Activated CD4-positive, alpha-beta T cell treated with anti-CD3 and anti-CD28 coated beads for 36 hours (primary cell): ENCODE measurements at regions of chr22 and their contacts with region 1.

Region 1: GRCh38 chr22:22884010-22884887 is 3.4 kb upstream of the IGLL5 start:
- DNase-seq: peak; percentile 79
- ATAC-seq: peak; percentile 56
- H3K4me3 Mint-ChIP-seq: no peak overlapping the region
- H3K27ac Mint-ChIP-seq: no peak overlapping the region
- H3K4me1 Mint-ChIP-seq: peaks cover 12% of the 10 kb centered on the region
- H3K27me3 Mint-ChIP-seq: peaks cover 7% of the 10 kb centered on the region

Region 2: GRCh38 chr22:22748297-22748743 is 135.9 kb before region 1 on chr22:
- CTCF ChIA-PET with region 1: interaction called, 33 read pairs
- POLR2A ChIA-PET with region 1: no interaction called
- intact Hi-C with region 1: loop called in 1 of 2 experiments (anchors 1 kb)
- DNase-seq: peak; percentile 60
- ATAC-seq: peak; percentile 79
- H3K4me3 Mint-ChIP-seq: no peak overlapping the region
- H3K27ac Mint-ChIP-seq: no peak overlapping the region
- H3K4me1 Mint-ChIP-seq: peaks cover 6% of the 10 kb centered on the region
- H3K27me3 Mint-ChIP-seq: no peaks in the 10 kb centered on the region

Region 3: GRCh38 chr22:22770280-22770871 is 113.9 kb before region 1 on chr22:
- CTCF ChIA-PET with region 1: interaction called, 20 read pairs
- POLR2A ChIA-PET with region 1: no interaction called
- intact Hi-C with region 1: loop called in 1 of 2 experiments (anchors 5 kb)
- DNase-seq: peak; percentile 74
- ATAC-seq: peak; percentile 71
- H3K4me3 Mint-ChIP-seq: no peak overlapping the region
- H3K27ac Mint-ChIP-seq: no peak overlapping the region
- H3K4me1 Mint-ChIP-seq: peaks cover 2% of the 10 kb centered on the region
- H3K27me3 Mint-ChIP-seq: peaks cover 6% of the 10 kb centered on the region

Region 4: DNA sequence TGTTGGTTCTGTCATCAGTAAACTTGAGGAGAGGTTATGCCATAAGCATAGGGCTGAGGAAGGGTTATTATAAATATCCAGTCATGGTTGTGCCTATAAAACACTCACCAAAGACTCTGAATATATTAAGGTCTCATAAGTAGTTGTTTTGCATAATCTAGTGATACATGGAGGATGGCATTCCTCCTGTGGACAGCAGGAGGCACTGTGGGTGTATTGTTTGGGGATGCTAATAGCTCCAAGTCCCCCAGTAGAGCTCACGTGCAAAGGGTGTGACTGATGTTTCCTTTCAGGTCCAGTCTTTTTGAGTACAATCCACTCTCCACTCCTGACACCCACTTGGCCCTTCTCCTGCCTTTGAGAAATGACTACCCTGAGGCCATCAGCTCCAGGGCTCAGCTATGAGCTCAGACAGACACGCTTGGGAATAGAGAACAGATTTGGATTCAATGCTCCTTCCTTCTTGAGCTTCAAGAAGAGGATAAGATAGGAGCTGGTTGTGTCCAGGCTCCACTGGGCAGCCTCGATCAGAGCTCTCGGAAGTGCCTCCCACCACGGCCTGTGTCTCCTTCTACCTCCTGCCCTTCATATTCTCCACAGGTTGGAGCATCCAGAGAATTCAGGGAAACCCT is 81.8 kb before region 1 on chr22:
- CTCF ChIA-PET with region 1: interaction called, 22 read pairs
- POLR2A ChIA-PET with region 1: interaction called, 3 read pairs
- intact Hi-C with region 1: loop called (anchors 1 to 2 kb)
- DNase-seq: peak; percentile 70
- ATAC-seq: peak; percentile 68
- H3K4me3 Mint-ChIP-seq: no peak overlapping the region
- H3K27ac Mint-ChIP-seq: no peak overlapping the region
- H3K4me1 Mint-ChIP-seq: peaks cover 38% of the 10 kb centered on the region
- H3K27me3 Mint-ChIP-seq: no peaks in the 10 kb centered on the region

Region 5: DNA sequence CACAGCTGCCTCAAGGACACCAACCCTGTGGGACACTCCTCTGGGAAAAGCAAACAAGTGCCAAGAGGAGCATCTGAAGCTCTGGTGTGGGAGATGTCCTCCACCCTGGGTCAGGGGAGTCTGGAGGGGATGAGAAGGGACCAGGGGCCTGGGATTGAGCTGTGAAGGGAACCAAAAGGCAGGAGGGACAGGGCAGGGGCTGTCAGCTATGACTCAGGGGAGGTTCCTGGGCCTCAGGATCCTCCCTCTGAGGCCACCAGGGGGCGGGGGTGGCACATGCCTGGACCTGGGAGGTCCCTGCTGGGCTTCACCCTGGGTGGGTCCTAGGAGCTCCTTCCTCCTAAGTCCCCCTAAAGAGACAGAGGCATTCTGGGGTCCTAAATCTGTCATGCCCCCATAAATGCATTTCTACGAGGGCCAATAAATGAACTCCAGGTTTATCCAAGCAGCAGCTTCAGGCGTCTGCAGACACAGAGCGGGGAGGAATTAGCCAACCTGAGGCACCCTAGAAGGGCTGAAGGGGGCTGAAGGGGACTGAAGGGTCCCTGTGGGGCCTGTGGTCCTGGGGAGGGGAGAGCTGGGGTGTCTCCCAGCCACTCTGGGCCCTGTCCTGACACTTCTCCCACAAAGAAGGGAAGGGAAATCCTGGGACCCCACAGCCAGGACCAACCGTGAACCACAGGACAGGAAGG is 28.5 kb before region 1 on chr22:
- CTCF ChIA-PET with region 1: interaction called, 10 read pairs
- POLR2A ChIA-PET with region 1: no interaction called
- intact Hi-C with region 1: no loop called
- DNase-seq: peak; percentile 58
- ATAC-seq: peak; percentile 53
- H3K4me3 Mint-ChIP-seq: no peak overlapping the region
- H3K27ac Mint-ChIP-seq: no peak overlapping the region
- H3K4me1 Mint-ChIP-seq: no peaks in the 10 kb centered on the region
- H3K27me3 Mint-ChIP-seq: no peaks in the 10 kb centered on the region